ENCODE measurements at regions of chr4 and their contacts with region 1.

Region 1: GRCh38 chr4:10554694-10555093 is 97.5 kb upstream of the ZNF518B start:
- DNase-seq: no peak
- ATAC-seq: peak; percentile 79
- H3K4me3 ChIP-seq: no peak overlapping the region
- H3K27ac ChIP-seq: no peak overlapping the region
- H3K4me1 ChIP-seq: no peaks in the 10 kb centered on the region
- H3K27me3 ChIP-seq: no peaks in the 10 kb centered on the region

Region 2: DNA sequence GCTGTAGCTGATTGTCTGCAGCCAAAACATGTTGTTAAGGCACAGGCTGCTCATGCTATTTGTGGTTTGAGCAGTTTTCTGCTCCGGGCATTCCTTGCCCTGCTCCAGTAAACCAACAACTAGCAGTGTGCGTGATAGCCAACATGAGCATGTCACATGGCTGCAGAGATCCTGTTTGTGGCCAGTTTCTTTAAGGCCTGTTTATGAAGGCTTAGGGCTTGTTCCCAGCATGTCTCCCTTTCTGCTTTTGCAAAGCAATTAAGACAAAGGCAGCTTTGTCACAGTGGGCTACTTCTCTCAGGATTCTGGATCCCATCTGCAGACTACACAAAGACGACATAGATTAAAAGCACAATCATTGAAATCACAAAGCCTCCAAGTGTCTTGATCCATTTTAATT is 258.0 kb before region 1 on chr4:
- intact Hi-C with region 1: no loop called
- DNase-seq: no peak
- ATAC-seq: peak in 1 of 2 donors; percentile 61
- H3K4me3 ChIP-seq: no peak overlapping the region
- H3K27ac ChIP-seq: no peak overlapping the region
- H3K4me1 ChIP-seq: no peaks in the 10 kb centered on the region
- H3K27me3 ChIP-seq: no peaks in the 10 kb centered on the region

Region 3: DNA sequence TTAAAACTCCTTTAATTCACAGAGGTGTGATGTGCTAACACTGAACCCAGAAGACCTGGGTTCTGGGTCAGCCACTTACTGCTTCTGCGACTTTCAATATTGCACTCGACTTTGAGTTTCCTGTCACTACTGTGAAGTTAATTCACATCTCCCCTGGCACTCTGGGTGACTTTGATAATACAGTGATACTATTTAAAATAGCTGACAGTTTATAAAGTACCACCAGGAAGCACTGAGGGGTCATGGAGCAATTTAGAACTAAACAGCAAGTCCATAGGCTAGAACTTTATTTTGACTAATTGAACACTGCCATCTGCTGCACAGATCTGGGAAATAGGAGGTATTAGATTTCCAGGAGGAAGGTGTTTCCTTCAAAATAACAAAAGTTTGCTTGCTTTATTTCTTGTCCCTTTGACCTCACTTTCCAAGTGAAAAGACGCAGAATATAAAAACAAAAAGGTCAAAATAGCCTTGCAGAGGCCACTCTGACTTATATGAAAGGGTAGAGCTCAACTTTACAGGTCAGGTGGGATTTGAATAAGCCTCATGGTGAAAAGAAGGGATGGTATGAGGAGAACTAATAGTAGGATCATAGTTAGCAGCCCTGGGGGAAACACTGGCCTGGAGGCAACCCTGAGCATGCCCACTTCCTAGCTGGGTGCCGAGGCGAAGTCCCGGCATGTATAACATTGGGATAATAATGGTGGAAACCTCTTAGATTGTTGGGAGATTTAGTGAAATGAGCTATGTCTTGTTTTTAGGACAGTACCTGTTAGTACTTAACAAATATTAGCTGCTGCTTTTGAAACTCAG is 150.9 kb before region 1 on chr4:
- intact Hi-C with region 1: loop called in 1 of 4 experiments (anchors 5 kb)
- DNase-seq: no peak
- ATAC-seq: peak in 1 of 2 donors; percentile 37
- H3K4me3 ChIP-seq: no peak overlapping the region
- H3K27ac ChIP-seq: no peak overlapping the region
- H3K4me1 ChIP-seq: no peaks in the 10 kb centered on the region
- H3K27me3 ChIP-seq: no peaks in the 10 kb centered on the region

Region 4: GRCh38 chr4:10461091-10461849 is 93.4 kb before region 1 on chr4:
- intact Hi-C with region 1: loop called in 1 of 4 experiments (anchors 10 kb)
- DNase-seq: peak; percentile 59 to 87 (median 81)
- ATAC-seq: peak; percentile 84 to 94
- H3K4me3 ChIP-seq: peak overlapping the region; percentile 13
- H3K27ac ChIP-seq: no peak overlapping the region
- H3K4me1 ChIP-seq: peaks cover 2% of the 10 kb centered on the region
- H3K27me3 ChIP-seq: no peaks in the 10 kb centered on the region